PC-3 (cell line): ENCODE measurements at regions of chr1 and their contacts with region 1.

Region 1: DNA sequence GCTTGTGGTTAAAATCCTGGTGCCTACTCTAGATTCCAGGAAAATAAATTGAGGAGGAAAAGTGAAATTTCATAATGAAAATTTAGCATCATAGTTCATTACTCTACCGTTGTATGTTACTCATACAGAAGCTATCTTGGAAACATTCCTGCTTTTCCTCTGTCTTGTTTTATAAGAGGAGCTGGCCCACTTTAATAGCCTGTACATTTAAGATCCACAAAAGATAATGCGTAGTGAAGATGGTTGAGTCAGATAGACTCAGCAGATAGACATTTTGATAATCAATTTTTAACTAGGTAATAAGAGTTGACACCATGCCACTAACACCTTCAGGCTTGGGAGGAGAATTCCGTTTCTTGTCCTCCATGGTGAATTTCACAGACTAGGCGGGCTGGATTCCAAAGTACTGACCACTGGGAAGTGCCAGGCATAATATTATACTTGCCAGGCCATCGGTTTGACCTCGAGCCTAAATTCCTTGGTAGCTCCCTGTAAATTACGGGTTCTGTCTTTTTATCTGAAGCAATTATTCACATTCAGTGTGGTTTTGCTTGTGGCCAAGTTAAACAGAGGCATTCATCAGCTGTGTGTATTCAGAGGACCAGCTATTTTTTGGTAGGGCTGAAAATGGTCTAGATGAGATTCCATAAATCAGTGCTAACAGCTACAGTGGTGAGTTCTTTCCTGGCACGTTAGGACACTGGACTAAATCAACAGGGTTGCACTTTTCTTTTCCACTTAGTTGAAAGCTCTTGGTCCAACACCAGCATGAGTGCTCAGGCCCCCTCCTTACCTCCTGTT is 111.9 kb upstream of the KAZN start:
- DNase-seq: peak; percentile 99
- ATAC-seq: peak; percentile 86
- H3K4me3 ChIP-seq: peak overlapping the region; percentile 9; the same call in 1 of the 2 replicates
- H3K27ac ChIP-seq: peak overlapping the region; percentile 89
- H3K4me1 ChIP-seq: peaks cover 33% of the 10 kb centered on the region
- H3K27me3 ChIP-seq: no peaks in the 10 kb centered on the region
- CTCF ChIP-seq: no peak

Region 2: GRCh38 chr1:14138134-14139086 is 348.2 kb before region 1 on chr1:
- CTCF ChIA-PET with region 1: interaction called, 4 read pairs
- POLR2A ChIA-PET with region 1: no interaction called
- intact Hi-C with region 1: loop called (anchors 10 kb)
- DNase-seq: peak; percentile 83
- ATAC-seq: peak; percentile 60
- H3K4me3 ChIP-seq: no peak overlapping the region
- H3K27ac ChIP-seq: peak overlapping the region; percentile 72
- H3K4me1 ChIP-seq: peaks cover 29% of the 10 kb centered on the region
- H3K27me3 ChIP-seq: no peaks in the 10 kb centered on the region
- CTCF ChIP-seq: peak; percentile 25; the same call in 1 of the 2 replicates

Region 3: DNA sequence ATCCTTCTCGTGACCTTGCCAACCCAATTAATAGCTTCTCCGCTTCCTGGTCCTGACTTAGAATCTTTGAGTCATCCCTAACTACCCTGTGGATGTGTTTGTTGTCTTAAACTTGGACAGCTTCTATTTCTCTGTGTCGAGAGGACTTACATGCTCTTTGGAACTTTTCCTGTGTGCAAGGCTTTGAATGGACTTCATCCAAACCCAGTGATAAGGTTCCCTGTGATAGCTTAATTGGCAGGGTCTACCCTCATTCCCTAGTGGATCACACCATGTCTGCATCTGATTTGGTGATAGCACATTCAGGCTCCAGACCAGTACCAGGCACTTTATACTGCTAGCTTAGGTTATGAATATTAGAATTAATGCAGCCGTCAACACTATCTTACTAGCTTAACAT is 266.3 kb before region 1 on chr1:
- CTCF ChIA-PET with region 1: no interaction called
- POLR2A ChIA-PET with region 1: no interaction called
- intact Hi-C with region 1: no loop called
- DNase-seq: no peak
- ATAC-seq: no peak
- H3K4me3 ChIP-seq: no peak overlapping the region
- H3K27ac ChIP-seq: no peak overlapping the region
- H3K4me1 ChIP-seq: peaks cover 9% of the 10 kb centered on the region
- H3K27me3 ChIP-seq: no peaks in the 10 kb centered on the region
- CTCF ChIP-seq: no peak

Region 4: GRCh38 chr1:14371771-14372497 is 114.7 kb before region 1 on chr1:
- CTCF ChIA-PET with region 1: no interaction called
- POLR2A ChIA-PET with region 1: no interaction called
- intact Hi-C with region 1: loop called (anchors 1 kb)
- DNase-seq: peak; percentile 93
- ATAC-seq: peak; percentile 94
- H3K4me3 ChIP-seq: peak overlapping the region; percentile 28
- H3K27ac ChIP-seq: peak overlapping the region; percentile 92
- H3K4me1 ChIP-seq: peaks cover 33% of the 10 kb centered on the region
- H3K27me3 ChIP-seq: no peaks in the 10 kb centered on the region
- CTCF ChIP-seq: no peak

Region 5: DNA sequence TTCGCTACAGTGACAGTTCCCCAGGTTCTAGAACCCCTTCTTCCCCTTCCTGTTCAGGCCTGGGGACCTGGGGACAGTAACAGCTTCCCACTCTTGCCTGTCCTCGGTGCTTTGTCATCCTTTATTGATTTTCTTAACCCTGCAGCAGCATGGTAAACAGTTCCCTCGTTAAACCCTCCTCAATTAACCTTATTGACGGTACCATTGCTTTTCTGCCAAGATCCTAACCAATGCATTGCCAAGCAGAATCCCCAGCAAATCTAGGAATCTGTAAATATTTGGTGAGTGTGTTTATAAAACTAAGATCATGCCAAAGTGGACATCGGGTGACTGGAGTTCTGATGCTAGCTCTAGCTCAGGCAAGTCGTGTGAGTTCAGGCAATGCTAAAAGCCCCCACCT is 12.2 kb after region 1 on chr1:
- CTCF ChIA-PET with region 1: no interaction called
- POLR2A ChIA-PET with region 1: no interaction called
- intact Hi-C with region 1: loop called (anchors 1 kb)
- DNase-seq: peak; percentile 60
- ATAC-seq: peak; percentile 67
- H3K4me3 ChIP-seq: no peak overlapping the region
- H3K27ac ChIP-seq: peak overlapping the region; percentile 64
- H3K4me1 ChIP-seq: peaks cover 23% of the 10 kb centered on the region
- H3K27me3 ChIP-seq: no peaks in the 10 kb centered on the region
- CTCF ChIP-seq: no peak

Region 6: GRCh38 chr1:14571819-14572767 is 85.5 kb after region 1 on chr1:
- CTCF ChIA-PET with region 1: no interaction called
- POLR2A ChIA-PET with region 1: no interaction called
- intact Hi-C with region 1: loop called (anchors 2 kb)
- DNase-seq: peak; percentile 10
- ATAC-seq: no peak
- H3K4me3 ChIP-seq: no peak overlapping the region
- H3K27ac ChIP-seq: no peak overlapping the region
- H3K4me1 ChIP-seq: peaks cover 10% of the 10 kb centered on the region
- H3K27me3 ChIP-seq: no peaks in the 10 kb centered on the region
- CTCF ChIP-seq: peak; percentile 47; the same call in 1 of the 2 replicates

Region 7: DNA sequence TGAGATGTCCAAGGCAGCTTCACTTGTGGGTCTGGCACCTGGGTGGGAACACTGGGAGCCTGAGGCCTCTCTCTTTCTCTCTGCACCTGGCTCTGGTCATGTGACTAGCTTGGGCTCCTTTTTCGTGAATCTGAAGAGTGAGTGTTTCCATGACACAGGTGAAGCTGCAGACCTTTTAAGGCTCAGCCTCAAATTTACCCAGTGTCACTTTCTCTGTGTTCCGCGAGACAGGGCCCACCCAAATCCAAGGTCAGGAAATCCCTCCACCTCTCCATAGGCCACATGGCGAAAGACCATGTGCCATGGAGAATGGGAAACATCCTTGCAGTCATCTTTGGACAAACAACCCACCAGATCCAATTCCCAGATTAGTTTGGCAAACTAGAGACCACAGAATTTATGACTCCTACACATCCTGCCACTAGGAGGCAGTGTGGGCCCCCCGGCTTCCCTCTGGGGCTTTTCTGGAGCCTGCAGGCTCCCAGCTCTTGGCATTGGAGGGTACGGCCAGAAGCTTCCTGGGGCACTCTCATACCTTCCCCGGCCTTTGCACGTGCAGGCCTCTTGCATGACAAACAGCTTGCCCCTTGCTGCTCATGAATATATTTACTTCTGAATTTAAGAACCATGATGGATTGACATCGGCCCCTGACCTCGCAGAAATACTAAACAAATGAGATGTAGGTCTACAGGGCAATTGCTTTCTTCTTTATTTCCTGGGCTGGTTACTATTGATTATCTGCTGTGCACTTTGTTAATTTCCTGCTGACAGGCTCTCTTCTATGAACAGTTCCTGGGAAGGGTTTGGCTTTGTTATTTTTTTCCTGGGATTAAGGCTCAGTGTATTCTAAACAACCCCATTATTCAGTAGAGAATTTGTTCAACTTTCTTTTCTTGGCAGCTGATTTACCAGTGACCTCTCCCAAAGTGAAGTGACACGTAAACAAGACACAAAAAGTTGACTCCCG is 292.6 kb after region 1 on chr1:
- CTCF ChIA-PET with region 1: no interaction called
- POLR2A ChIA-PET with region 1: no interaction called
- intact Hi-C with region 1: no loop called
- DNase-seq: peak; percentile 48
- ATAC-seq: no peak
- H3K4me3 ChIP-seq: no peak overlapping the region
- H3K27ac ChIP-seq: no peak overlapping the region
- H3K4me1 ChIP-seq: no peaks in the 10 kb centered on the region
- H3K27me3 ChIP-seq: no peaks in the 10 kb centered on the region
- CTCF ChIP-seq: peak; percentile 79